ENCODE measurements at regions of chr12 and their contacts with region 1.

Region 1: DNA sequence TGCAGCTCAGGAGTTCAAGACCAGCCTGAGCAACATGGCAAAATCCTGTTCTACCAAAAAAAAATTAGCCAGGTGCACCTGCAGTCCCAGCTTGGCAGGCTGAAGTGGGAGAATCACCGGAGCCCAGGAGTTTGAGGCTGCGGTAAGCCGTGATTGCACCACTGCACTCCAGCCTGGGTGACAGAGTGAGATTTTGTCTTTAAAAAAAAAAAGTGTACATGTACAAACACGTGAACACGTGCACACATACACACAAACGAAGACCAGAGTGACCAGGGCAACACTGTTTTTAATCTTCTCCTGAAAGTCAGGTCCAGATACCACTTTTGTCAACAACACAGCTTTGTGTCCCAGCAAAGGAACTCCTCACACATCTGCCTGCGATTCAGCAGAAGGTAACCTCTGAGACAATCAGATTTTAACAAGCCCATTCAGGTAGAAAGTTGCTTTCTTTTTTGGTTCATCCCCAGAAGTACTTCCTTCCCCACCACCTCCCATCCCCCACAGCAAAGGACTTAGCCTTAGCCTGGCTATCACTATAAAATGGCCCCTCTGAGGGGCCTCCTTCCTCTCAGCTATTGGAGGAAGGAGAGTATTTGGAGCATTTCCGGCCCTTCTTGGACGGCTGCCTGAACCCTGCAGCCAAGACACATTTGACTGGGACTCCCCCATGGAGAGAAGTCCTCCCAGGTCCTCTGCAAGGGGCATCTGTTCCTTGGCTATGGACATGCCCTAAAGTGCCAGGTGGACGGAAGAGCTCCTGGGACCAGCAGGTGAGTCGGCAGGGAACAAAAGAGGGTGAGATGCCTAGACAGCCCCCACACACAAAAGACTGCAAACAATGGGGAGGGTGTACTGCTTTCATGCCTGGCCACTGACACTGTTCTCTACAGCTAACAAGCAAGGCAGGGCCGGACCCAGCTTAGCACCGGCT is 9.8 kb downstream of the CTDSP2 start:
- DNase-seq: peak; percentile 82 to 93
- ATAC-seq: peak; percentile 48 to 82 (median 74)
- H3K4me3 ChIP-seq: peak overlapping the region in 8 of 10 donors; percentile 13 to 41 (median 32)
- H3K27ac ChIP-seq: peak overlapping the region in 9 of 10 donors; percentile 49 to 100 (median 78)
- H3K4me1 ChIP-seq: peaks cover 86 to 100% (median 100%) of the 10 kb centered on the region in 9 donors
- H3K27me3 ChIP-seq: no peaks in the 10 kb centered on the region
- CTCF ChIP-seq: no peak

Region 2: DNA sequence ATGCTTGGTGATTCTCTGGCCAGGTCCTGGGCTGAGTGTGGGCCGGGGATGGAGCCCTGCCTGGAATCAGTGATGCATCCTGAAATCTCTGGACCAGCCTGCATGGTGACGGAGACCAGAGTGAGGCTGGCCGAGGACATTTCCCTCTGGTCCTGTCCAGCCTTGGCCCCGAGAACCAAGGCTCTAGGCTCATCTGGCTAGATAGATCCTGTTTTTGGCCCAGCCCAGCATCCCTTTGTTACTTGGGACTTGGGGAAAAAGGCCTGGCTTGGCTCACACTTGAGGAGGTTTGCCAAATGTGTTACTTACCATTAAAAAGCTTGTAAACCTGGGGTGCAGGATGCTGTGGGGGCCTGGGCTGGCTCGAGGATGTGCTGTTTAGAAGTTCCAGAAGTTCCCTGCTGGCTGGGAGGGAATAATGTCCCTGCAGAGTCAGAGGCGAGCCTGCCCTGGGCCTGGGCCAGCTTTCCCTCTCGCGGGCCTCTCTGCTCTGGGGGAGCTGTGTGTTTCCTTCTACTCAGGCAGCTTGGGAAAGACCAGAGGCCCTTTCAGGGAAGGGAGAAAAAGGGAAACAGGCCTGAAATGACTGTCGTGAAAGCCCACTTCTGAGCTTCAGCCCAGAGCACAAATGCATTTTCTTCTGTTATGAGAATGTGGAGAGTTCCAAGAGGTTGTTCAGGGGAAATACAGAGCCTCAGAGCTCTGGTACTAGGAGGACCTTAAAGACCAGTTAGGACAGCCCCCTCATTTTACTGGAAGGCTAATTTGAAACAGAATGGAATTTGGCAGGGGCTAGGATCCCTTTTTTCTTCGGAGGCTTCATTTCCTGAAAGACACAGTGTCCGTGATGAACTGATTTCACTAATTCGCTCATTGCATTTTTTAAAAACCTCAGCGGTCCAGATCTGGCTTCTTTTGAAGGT is 57.0 kb after region 1 on chr12:
- intact Hi-C with region 1: loop called in 8 of 10 experiments (anchors 2 to 5 kb)
- DNase-seq: peak; percentile 93 to 95
- ATAC-seq: peak; percentile 74 to 83 (median 77)
- H3K4me3 ChIP-seq: peak overlapping the region in 7 of 10 donors; percentile 0 to 30 (median 9)
- H3K27ac ChIP-seq: peak overlapping the region; percentile 92 to 100 (median 98)
- H3K4me1 ChIP-seq: peaks cover 32 to 100% (median 93%) of the 10 kb centered on the region in 9 donors
- H3K27me3 ChIP-seq: no peaks in the 10 kb centered on the region
- CTCF ChIP-seq: peak in 5 of 9 donors; percentile 10 to 44 (median 20)

Region 3: DNA sequence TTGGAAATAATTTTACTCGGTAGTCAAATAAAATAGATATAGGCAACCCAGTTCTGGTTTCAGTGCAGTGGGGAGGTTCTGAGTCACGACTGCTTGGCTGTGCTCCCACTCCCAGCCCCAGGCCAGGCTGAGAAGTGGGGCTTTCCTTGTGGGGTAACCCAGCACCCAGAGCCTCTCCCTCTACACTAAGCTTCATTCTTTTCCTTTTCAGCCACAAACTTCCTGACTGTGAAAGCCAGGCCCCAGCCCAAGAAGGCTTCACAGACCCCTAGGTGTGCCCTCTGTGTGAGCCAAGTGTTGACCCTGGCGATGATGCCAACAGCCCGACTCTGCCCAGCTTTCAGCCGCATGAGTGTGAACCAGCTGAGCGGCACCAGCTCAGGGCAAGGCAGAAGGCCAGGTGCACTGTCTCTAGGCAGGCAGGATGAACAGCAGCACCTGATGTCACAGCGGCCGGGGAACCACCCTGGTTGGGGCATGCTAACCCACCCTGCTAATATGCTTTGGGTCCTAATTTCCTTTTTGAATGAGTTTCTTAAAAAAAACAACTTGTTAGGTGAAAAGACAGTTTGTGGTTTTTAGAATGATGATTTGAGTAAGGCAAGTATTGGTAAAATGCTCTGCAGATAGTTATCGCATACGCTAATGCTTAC is 62.4 kb after region 1 on chr12:
- intact Hi-C with region 1: loop called (anchors 2 to 5 kb)
- DNase-seq: peak in 1 of 2 donors; percentile 43
- ATAC-seq: peak in 4 of 8 donors; percentile 11 to 54 (median 35)
- H3K4me3 ChIP-seq: no peak overlapping the region
- H3K27ac ChIP-seq: peak overlapping the region in 9 of 10 donors; percentile 58 to 100 (median 98)
- H3K4me1 ChIP-seq: peaks cover 25 to 58% (median 48%) of the 10 kb centered on the region in 9 donors
- H3K27me3 ChIP-seq: no peaks in the 10 kb centered on the region
- CTCF ChIP-seq: no peak